ENCODE measurements at regions of chr4 and their contacts with region 1.

Region 1: GRCh38 chr4:185134307-185134869 is 8.7 kb upstream of the SLC25A4 start:
- DNase-seq: no peak
- ATAC-seq: peak in 3 of 4 donors; percentile 39 to 47 (median 43)
- H3K4me3 ChIP-seq: no peak overlapping the region
- H3K27ac ChIP-seq: no peak overlapping the region
- H3K4me1 ChIP-seq: peaks cover 0 to 24% (median 9%) of the 10 kb centered on the region in 12 donors
- H3K27me3 ChIP-seq: no peaks in the 10 kb centered on the region
- CTCF ChIP-seq: peak; percentile 70 to 89 (median 80)
- POLR2A ChIP-seq: no peak

Region 2: DNA sequence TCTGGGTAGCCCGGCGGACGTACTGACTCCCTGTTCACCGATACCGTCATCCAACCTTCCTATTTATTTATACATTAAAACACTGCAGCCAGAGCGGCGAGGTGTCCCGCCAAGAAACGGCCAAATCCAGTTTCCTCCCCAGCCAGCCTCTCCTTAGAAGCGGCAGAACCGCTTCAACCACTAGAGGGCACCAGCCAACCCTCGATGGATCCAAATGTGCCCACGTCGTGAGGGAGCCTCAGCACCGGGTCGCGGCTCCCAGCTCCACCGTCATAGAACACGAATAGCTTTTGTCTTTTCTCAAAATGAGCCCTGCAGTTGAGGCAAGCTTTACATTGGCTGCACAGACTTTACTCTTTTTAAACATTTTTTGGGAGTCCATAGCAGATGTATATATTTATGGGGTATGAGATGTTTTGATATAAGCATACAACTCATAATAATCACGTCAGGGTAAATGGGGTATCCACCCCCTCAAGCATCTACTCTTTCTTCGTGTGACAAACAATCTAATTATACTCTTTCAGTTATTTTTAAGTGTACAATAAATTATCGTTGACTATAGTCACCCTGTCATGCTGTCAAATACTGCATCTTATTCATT is 129.1 kb before region 1 on chr4:
- intact Hi-C with region 1: loop called in 1 of 10 experiments (anchors 10 kb)
- DNase-seq: peak; percentile 79 to 88 (median 85)
- ATAC-seq: peak; percentile 83 to 95 (median 94)
- H3K4me3 ChIP-seq: peak overlapping the region in 11 of 12 donors; percentile 5 to 42 (median 30)
- H3K27ac ChIP-seq: peak overlapping the region in 4 of 12 donors; percentile 1 to 42 (median 14)
- H3K4me1 ChIP-seq: peaks cover 0 to 12% (median 9%) of the 10 kb centered on the region in 12 donors
- H3K27me3 ChIP-seq: peaks cover 0 to 23% (median 0%) of the 10 kb centered on the region in 9 donors
- CTCF ChIP-seq: peak in 11 of 12 donors; percentile 84 to 96 (median 93)
- POLR2A ChIP-seq: no peak

Region 3: DNA sequence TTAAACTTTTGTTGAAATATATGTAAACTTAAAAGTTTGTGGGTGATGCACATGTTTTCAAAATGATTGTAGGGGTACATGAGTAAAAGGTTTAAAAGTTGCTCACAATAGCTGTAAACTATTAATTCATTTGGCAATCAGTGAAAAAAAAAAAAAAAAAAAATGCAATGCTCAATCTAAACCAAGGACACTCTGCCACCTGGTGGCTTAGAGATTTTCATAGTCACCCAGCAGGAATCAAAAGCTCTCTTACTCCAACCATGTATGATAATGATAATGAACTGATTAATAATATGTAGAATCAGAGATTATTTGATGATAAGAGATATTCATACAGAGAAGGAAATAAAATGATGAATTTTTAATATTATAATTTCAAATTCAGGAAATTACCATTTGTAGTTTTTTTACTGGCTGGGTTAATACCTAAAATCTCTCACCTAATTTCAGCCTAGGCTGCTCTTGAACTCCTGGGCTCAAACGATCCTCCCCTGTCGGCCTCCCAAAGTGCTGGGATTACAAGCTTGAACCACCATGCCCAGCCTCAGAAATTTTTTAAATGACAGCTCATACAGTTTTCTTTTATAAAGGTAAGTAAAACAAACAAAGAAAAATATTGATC is 38.2 kb before region 1 on chr4:
- intact Hi-C with region 1: loop called in 5 of 10 experiments (anchors 5 kb)
- DNase-seq: peak in 1 of 5 donors; percentile 32
- ATAC-seq: no peak
- H3K4me3 ChIP-seq: no peak overlapping the region
- H3K27ac ChIP-seq: no peak overlapping the region
- H3K4me1 ChIP-seq: peaks cover 0 to 4% (median 0%) of the 10 kb centered on the region in 12 donors
- H3K27me3 ChIP-seq: no peaks in the 10 kb centered on the region
- CTCF ChIP-seq: peak; percentile 42 to 83 (median 64)
- POLR2A ChIP-seq: no peak